ENCODE measurements at regions of chr1 and their contacts with region 1.

Region 1: GRCh38 chr1:51697166-51697565 is 80.3 kb downstream of the OSBPL9 start:
- DNase-seq: no peak
- H3K4me3 ChIP-seq: no peak overlapping the region
- H3K27ac ChIP-seq: no peak overlapping the region
- H3K27me3 ChIP-seq: no peaks in the 10 kb centered on the region
- CTCF ChIP-seq: no peak

Region 2: GRCh38 chr1:51433269-51433971 is 263.7 kb before region 1 on chr1:
- CTCF ChIA-PET with region 1: interaction called, 10 read pairs
- POLR2A ChIA-PET with region 1: no interaction called
- DNase-seq: no peak
- H3K4me3 ChIP-seq: no peak overlapping the region
- H3K27ac ChIP-seq: no peak overlapping the region
- H3K27me3 ChIP-seq: no peaks in the 10 kb centered on the region
- CTCF ChIP-seq: no peak

Region 3: GRCh38 chr1:51653127-51653526 is 44.0 kb before region 1 on chr1:
- CTCF ChIA-PET with region 1: no interaction called
- POLR2A ChIA-PET with region 1: no interaction called
- DNase-seq: no peak
- H3K4me3 ChIP-seq: no peak overlapping the region
- H3K27ac ChIP-seq: no peak overlapping the region
- H3K27me3 ChIP-seq: no peaks in the 10 kb centered on the region
- CTCF ChIP-seq: no peak

Region 4: DNA sequence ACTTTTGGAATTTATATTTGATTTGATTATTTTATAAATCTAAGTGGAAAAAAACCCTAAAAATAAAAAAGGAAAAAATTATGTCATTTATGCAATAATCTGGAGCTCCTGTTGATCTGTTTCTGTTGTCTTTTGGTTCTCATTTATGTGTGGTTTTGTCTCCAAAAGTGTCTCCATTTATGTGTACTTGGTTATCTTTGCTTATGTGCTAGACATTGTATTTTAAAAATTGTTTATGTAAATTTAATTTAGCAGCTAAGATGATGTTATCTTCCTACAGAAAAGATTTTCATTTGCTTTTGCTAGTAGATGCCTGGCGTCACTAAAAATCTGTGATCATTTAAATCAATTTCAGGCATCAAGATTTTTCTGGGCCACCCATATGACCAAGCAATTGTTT is 15.4 kb after region 1 on chr1:
- CTCF ChIA-PET with region 1: no interaction called
- POLR2A ChIA-PET with region 1: no interaction called
- DNase-seq: no peak
- H3K4me3 ChIP-seq: no peak overlapping the region
- H3K27ac ChIP-seq: no peak overlapping the region
- H3K27me3 ChIP-seq: no peaks in the 10 kb centered on the region
- CTCF ChIP-seq: no peak

Region 5: DNA sequence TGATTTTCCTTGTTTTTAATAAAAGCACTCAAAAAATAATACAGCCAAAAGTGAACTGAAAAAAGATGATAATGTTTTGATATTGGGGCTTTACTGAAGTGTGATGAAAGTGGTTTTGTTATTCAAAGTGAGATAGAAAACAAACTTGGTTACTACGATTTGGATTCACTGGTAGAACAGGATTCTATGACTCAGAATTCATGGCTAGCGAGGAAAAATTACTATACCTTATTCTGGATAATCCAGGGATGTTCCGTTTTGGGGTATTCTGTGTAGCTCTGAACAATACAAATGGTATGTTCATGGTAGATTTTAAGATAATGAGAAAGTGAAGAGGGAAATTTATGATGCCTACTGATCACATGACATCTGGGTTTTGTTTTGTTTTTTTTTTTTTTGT is 63.7 kb after region 1 on chr1:
- CTCF ChIA-PET with region 1: no interaction called
- POLR2A ChIA-PET with region 1: no interaction called
- DNase-seq: no peak
- H3K4me3 ChIP-seq: no peak overlapping the region
- H3K27ac ChIP-seq: no peak overlapping the region
- H3K27me3 ChIP-seq: no peaks in the 10 kb centered on the region
- CTCF ChIP-seq: no peak

Region 6: DNA sequence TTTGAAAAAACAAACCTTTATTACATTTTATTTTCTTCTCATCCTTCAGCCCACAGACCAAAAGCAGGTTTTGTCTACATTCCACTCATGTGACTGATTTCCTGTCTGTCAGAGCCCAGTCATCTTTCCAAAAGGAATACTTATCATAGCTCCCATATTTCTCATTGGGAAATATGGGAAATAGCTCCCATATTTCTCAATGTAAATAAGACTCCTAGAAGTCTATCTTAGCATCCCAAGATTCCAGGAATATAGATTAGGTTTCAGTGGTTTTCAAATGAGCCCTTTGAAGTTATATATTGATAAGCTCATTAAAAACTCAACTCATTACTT is 200.5 kb after region 1 on chr1:
- CTCF ChIA-PET with region 1: no interaction called
- POLR2A ChIA-PET with region 1: no interaction called
- DNase-seq: peak; percentile 85
- H3K4me3 ChIP-seq: no peak overlapping the region
- H3K27ac ChIP-seq: peak overlapping the region; percentile 96
- H3K27me3 ChIP-seq: no peaks in the 10 kb centered on the region
- CTCF ChIP-seq: no peak